HAP-1 (cell line): ENCODE measurements at regions of chr15 and their contacts with region 1.

Region 1: GRCh38 chr15:65298731-65299130 is 2.9 kb downstream of the RNU5A-1 start:
- DNase-seq: no peak
- H3K4me3 ChIP-seq: no peak overlapping the region
- H3K4me1 ChIP-seq: peaks cover 22% of the 10 kb centered on the region
- H3K27me3 ChIP-seq: no peaks in the 10 kb centered on the region

Region 2: DNA sequence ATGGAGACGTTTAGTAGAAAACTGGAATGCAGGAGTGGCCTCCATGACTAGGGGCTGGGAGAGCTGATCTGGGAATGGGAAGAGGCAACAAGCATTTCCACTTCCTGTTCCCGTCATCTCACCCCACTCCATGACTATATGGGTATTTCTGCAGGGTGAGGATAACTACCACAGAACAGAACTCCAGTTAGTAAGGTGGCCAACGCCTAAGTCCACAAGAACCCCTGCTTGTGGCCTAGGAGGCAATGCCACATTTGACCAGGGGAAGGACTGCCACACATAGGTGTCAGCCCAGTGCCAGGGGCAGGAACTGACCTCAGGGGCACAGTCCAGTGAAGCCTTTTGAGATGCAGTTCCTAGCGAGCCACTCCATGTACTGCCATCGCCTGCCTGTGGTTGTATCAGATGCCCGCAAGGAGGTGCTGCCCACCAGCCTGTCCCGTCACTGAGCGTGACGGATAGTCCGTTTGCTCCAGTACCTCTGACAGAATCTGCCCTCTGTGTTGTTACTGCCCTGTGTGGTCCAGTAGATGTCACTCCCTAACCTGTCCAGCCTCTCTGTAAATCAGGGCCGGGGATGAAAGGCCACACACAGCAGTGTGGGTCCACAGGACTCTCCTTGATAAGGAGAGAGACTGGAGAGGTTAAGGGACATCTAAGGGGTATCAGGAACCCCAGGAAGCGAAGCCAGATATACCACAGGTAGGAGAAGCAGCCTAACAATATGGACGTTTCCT is 265.8 kb before region 1 on chr15:
- in situ Hi-C with region 1: loop called (anchors 5 kb)
- DNase-seq: peak; percentile 89 to 92
- H3K4me3 ChIP-seq: no peak overlapping the region
- H3K4me1 ChIP-seq: peaks cover 9% of the 10 kb centered on the region
- H3K27me3 ChIP-seq: no peaks in the 10 kb centered on the region